ENCODE measurements at regions of chr10 and their contacts with region 1.

Region 1: GRCh38 chr10:125881192-125881591 is at the start of gene DHX32:
- DNase-seq: no peak
- ATAC-seq: no peak
- H3K4me3 Mint-ChIP-seq: no peak within 1 kb of the TSS
- H3K27ac Mint-ChIP-seq: no peak within 1 kb of the TSS
- H3K4me1 Mint-ChIP-seq: no peaks in the 10 kb centered on the region
- H3K27me3 Mint-ChIP-seq: no peaks in the 10 kb centered on the region
- CTCF ChIP-seq: no peak
- total RNA-seq, gene DHX32: 26.6 to 27.8 TPM

Region 2: GRCh38 chr10:125868372-125868975 is 12.7 kb before region 1 on chr10:
- CTCF ChIA-PET with region 1: interaction called, 21 read pairs
- POLR2A ChIA-PET with region 1: no interaction called
- intact Hi-C with region 1: no loop called
- DNase-seq: peak; percentile 18
- ATAC-seq: peak; percentile 53
- H3K4me3 Mint-ChIP-seq: no peak overlapping the region
- H3K27ac Mint-ChIP-seq: no peak overlapping the region
- H3K4me1 Mint-ChIP-seq: no peaks in the 10 kb centered on the region
- H3K27me3 Mint-ChIP-seq: no peaks in the 10 kb centered on the region
- CTCF ChIP-seq: peak; percentile 84

Measured in activated CD8-positive, alpha-beta T cell treated with anti-CD3 and anti-CD28 coated beads for 36 hours (primary cell).